PC-9 (cell line): ENCODE measurements at regions of chr9 and their contacts with region 1.

Region 1: DNA sequence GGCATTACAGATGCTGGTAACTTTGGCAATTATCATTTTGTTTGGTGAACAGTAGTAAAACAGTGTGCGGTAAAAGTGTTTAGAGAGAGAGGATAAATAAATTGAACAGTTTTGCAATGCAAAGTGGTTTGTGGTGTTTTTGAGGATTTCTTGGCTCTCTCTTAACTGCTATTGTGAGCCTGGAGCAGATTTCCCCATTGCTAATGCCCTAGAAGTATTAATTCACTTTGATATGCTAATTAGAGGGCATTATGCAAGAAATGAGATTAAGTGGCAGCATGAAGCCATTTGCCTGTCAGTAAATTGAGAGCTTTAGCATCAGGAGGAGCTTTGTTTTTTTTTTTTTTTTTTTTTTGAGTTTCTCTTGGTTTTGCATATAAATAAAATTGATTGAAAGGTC is 8.2 kb downstream of the PBX3 start:
- DNase-seq: no peak
- H3K4me3 ChIP-seq: no peak overlapping the region
- H3K27ac ChIP-seq: no peak overlapping the region
- H3K4me1 ChIP-seq: peaks cover 14% of the 10 kb centered on the region; the same call in 1 of the 2 replicates
- H3K27me3 ChIP-seq: no peaks in the 10 kb centered on the region
- CTCF ChIP-seq: no peak

Region 2: DNA sequence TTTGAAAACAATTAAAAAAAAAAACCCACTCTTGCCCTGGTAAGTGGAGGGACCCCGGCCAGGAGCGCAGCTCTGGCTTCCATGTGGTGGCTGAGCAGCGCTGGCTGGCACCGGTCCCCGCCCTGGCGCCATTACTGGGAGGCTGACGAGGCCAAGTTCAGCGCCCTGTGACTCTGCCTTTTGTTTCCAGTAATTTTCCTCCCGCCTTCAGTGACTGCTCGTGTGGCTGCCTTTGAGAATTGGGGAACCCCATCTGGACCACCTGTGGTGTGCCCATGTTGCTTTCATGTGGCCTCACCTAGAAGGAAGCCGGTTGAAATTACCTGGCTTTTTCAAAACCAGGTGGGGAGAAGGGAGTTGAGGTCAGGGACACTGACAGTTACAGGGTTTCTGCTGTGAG is 357.6 kb before region 1 on chr9:
- CTCF ChIA-PET with region 1: no interaction called
- POLR2A ChIA-PET with region 1: no interaction called
- intact Hi-C with region 1: no loop called
- DNase-seq: no peak
- H3K4me3 ChIP-seq: no peak overlapping the region
- H3K27ac ChIP-seq: no peak overlapping the region
- H3K4me1 ChIP-seq: no peaks in the 10 kb centered on the region
- H3K27me3 ChIP-seq: no peaks in the 10 kb centered on the region
- CTCF ChIP-seq: no peak

Region 3: GRCh38 chr9:126261584-126262356 is 506.4 kb after region 1 on chr9:
- CTCF ChIA-PET with region 1: no interaction called
- POLR2A ChIA-PET with region 1: no interaction called
- intact Hi-C with region 1: no loop called
- DNase-seq: no peak
- H3K4me3 ChIP-seq: no peak overlapping the region
- H3K27ac ChIP-seq: no peak overlapping the region
- H3K4me1 ChIP-seq: no peaks in the 10 kb centered on the region
- H3K27me3 ChIP-seq: peaks cover 59% of the 10 kb centered on the region
- CTCF ChIP-seq: no peak

Region 4: GRCh38 chr9:126500684-126501382 is 745.5 kb after region 1 on chr9:
- CTCF ChIA-PET with region 1: interaction called, 10 read pairs
- POLR2A ChIA-PET with region 1: no interaction called
- intact Hi-C with region 1: no loop called
- DNase-seq: peak; percentile 42 to 79
- H3K4me3 ChIP-seq: no peak overlapping the region
- H3K27ac ChIP-seq: no peak overlapping the region
- H3K4me1 ChIP-seq: no peaks in the 10 kb centered on the region
- H3K27me3 ChIP-seq: peaks cover 5% of the 10 kb centered on the region; the same call in 1 of the 2 replicates
- CTCF ChIP-seq: peak; percentile 93